ENCODE measurements at regions of chr19 and their contacts with region 1.

Region 1: DNA sequence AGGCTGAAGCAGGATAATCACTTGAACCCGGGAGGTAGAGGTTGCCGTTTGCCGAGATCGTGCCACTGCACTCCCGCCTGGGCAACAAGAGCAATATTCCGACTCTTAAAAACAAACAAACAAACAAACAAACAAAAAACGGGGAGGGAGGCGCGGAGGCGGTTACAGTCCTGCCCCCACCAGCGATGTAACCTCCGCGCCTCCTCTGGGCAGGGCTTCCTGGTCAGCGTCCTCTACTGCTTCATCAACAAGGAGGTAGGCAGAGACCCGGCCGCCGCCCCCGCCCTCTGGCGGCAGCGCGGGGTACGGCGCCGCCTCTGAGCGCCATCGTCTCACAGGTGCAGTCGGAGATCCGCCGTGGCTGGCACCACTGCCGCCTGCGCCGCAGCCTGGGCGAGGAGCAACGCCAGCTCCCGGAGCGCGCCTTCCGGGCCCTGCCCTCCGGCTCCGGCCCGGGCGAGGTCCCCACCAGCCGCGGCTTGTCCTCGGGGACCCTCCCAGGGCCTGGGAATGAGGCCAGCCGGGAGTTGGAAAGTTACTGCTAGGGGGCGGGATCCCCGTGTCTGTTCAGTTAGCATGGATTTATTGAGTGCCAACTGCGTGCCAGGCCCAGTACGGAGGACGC is 10.2 kb downstream of the SNRPD2 start:
- DNase-seq: peak; percentile 92 to 93
- ATAC-seq: peak; percentile 84 to 86
- H3K4me3 ChIP-seq: peak overlapping the region; percentile 38
- H3K27ac ChIP-seq: peak overlapping the region; percentile 67 to 87
- H3K4me1 ChIP-seq: peaks cover 12% of the 10 kb centered on the region
- CTCF ChIP-seq: peak; percentile 98
- EP300 ChIP-seq: no peak
- POLR2A ChIP-seq: no peak; the same call in 1 of the 2 replicates
- RAD21 ChIP-seq: peak; percentile 70 to 83

Region 2: DNA sequence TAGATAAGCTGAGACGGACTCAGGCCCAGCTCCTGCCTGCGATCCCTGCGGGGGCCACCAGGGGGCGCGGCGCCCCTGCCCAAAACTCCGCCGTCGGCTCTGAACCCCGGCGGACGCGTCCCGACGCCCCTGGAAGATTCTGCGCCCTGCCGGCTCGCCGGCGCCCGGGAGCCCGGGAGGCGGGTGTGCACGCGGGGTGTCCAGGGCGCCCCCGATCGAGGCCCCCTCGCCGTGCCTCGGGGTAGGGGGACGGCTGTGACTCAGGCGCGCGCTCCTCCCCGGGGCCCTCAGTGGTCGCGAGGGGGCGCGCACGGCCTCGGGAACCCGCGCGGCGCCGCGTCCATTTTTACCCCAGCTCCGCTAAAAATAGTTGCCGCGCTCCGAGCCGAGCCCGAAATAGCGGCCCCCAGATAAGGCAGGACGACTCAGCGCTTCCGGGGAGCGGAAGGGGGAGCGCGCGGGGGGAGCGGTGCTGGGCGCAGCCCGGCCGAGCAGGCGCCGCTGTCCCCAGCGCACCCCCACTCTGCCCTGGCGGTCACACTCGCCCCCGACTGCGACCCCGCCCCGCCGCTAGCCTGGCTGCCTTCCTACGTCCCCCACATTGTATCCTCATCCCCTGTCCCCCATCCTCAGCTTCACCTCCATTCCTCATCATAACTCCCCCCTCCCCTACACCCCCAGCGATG is 241.8 kb before region 1 on chr19:
- CTCF ChIA-PET with region 1: interaction called, 16 read pairs
- POLR2A ChIA-PET with region 1: no interaction called
- DNase-seq: peak; percentile 74 to 83
- ATAC-seq: peak; percentile 26 to 55
- H3K4me3 ChIP-seq: peak overlapping the region; percentile 52
- H3K27ac ChIP-seq: peak overlapping the region; percentile 80 to 95
- H3K4me1 ChIP-seq: peaks cover 27% of the 10 kb centered on the region
- CTCF ChIP-seq: peak; percentile 100
- EP300 ChIP-seq: no peak
- POLR2A ChIP-seq: peak; percentile 12; the same call in 1 of the 2 replicates
- RAD21 ChIP-seq: peak; percentile 77 to 99

Region 3: GRCh38 chr19:45500918-45501729 is 180.4 kb before region 1 on chr19:
- CTCF ChIA-PET with region 1: no interaction called
- POLR2A ChIA-PET with region 1: no interaction called
- DNase-seq: no peak
- ATAC-seq: no peak
- H3K4me3 ChIP-seq: no peak overlapping the region
- H3K27ac ChIP-seq: no peak overlapping the region
- H3K4me1 ChIP-seq: peaks cover 22% of the 10 kb centered on the region
- CTCF ChIP-seq: no peak
- EP300 ChIP-seq: no peak
- POLR2A ChIP-seq: no peak
- RAD21 ChIP-seq: no peak

Region 4: DNA sequence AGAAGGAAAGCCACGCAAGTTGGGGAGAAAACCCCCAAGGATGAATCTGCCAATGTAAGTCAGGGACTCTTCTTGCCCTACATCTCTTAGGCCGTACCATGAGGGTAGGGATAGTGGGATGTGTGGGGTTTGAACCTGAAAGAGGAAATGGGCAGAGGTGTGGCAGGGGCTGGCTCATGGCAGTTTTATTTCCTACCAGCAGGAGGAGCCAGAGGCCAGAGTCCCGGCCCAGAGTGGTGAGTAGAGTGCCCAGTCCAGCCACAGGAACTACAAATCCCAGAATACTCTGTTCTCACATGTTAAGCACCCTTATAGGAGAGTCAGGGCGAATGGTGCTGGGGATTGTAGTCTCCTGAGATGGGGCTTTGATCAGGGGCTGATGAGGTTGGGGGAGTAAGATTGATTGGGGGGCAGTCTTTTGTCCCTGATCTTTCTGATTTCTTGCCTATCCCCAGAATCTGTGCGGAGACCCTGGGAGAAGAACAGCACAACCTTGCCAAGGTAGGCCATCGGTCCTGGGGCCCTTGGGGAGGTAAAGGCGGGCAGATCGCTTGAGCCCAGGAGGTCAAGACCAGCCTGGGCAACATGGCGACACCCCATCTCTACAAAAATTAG is 157.8 kb before region 1 on chr19:
- CTCF ChIA-PET with region 1: interaction called, 10 read pairs
- POLR2A ChIA-PET with region 1: interaction called, 3 read pairs
- DNase-seq: peak; percentile 94
- ATAC-seq: peak; percentile 92 to 93
- H3K4me3 ChIP-seq: no peak overlapping the region
- H3K27ac ChIP-seq: peak overlapping the region in 1 of 2 experiments; percentile 47; a peak in 1 of 6 replicates
- H3K4me1 ChIP-seq: peaks cover 20% of the 10 kb centered on the region
- CTCF ChIP-seq: peak; percentile 97
- EP300 ChIP-seq: no peak
- POLR2A ChIP-seq: no peak
- RAD21 ChIP-seq: peak; percentile 97 to 98

Region 5: GRCh38 chr19:45657520-45658167 is 23.9 kb before region 1 on chr19:
- CTCF ChIA-PET with region 1: interaction called, 11 read pairs
- POLR2A ChIA-PET with region 1: no interaction called
- DNase-seq: no peak
- ATAC-seq: peak; percentile 8 to 33; a peak in 3 of 6 replicates
- H3K4me3 ChIP-seq: no peak overlapping the region
- H3K27ac ChIP-seq: no peak overlapping the region
- H3K4me1 ChIP-seq: no peaks in the 10 kb centered on the region
- CTCF ChIP-seq: no peak
- EP300 ChIP-seq: no peak
- POLR2A ChIP-seq: no peak
- RAD21 ChIP-seq: no peak

Region 6: GRCh38 chr19:45670670-45671453 is 10.6 kb before region 1 on chr19:
- CTCF ChIA-PET with region 1: interaction called, 90 read pairs
- POLR2A ChIA-PET with region 1: interaction called, 6 read pairs
- DNase-seq: peak; percentile 97
- ATAC-seq: peak; percentile 33 to 72
- H3K4me3 ChIP-seq: peak overlapping the region; percentile 39
- H3K27ac ChIP-seq: peak overlapping the region; percentile 60 to 76
- H3K4me1 ChIP-seq: peaks cover 27% of the 10 kb centered on the region
- CTCF ChIP-seq: no peak
- EP300 ChIP-seq: no peak
- POLR2A ChIP-seq: no peak
- RAD21 ChIP-seq: no peak

Region 7: GRCh38 chr19:45746866-45747265 is 65.4 kb after region 1 on chr19:
- CTCF ChIA-PET with region 1: no interaction called
- POLR2A ChIA-PET with region 1: no interaction called
- DNase-seq: no peak
- ATAC-seq: no peak
- H3K4me3 ChIP-seq: no peak overlapping the region
- H3K27ac ChIP-seq: no peak overlapping the region
- H3K4me1 ChIP-seq: no peaks in the 10 kb centered on the region
- CTCF ChIP-seq: no peak
- EP300 ChIP-seq: no peak
- POLR2A ChIP-seq: no peak
- RAD21 ChIP-seq: no peak

Measured in A549 (cell line).